Activated naive CD4-positive, alpha-beta T cell treated with anti-CD3 and anti-CD28 coated beads for 36 hours (primary cell): ENCODE measurements at regions of chr1 and their contacts with region 1.

Region 1: GRCh38 chr1:54800899-54801759 is at the start of gene TTC22:
- DNase-seq: peak; percentile 86
- H3K4me3 Mint-ChIP-seq: peak within 1 kb of the TSS; percentile 90
- H3K27ac Mint-ChIP-seq: peak within 1 kb of the TSS; percentile 91
- H3K4me1 Mint-ChIP-seq: peaks cover 55% of the 10 kb centered on the region
- H3K27me3 Mint-ChIP-seq: no peaks in the 10 kb centered on the region
- total RNA-seq, gene TTC22: 6.9 to 8.6 TPM

Region 2: GRCh38 chr1:53837924-53838652 is 963.0 kb before region 1 on chr1 and contains the start of gene NDC1:
- CTCF ChIA-PET with region 1: no interaction called
- intact Hi-C with region 1: loop called (anchors 2 kb)
- DNase-seq: peak; percentile 92
- H3K4me3 Mint-ChIP-seq: peak within 1 kb of the TSS; percentile 100
- H3K27ac Mint-ChIP-seq: peak within 1 kb of the TSS; percentile 96
- H3K4me1 Mint-ChIP-seq: peaks cover 27% of the 10 kb centered on the region
- H3K27me3 Mint-ChIP-seq: no peaks in the 10 kb centered on the region
- total RNA-seq, gene NDC1: 25.9 to 27.9 TPM

Region 3: DNA sequence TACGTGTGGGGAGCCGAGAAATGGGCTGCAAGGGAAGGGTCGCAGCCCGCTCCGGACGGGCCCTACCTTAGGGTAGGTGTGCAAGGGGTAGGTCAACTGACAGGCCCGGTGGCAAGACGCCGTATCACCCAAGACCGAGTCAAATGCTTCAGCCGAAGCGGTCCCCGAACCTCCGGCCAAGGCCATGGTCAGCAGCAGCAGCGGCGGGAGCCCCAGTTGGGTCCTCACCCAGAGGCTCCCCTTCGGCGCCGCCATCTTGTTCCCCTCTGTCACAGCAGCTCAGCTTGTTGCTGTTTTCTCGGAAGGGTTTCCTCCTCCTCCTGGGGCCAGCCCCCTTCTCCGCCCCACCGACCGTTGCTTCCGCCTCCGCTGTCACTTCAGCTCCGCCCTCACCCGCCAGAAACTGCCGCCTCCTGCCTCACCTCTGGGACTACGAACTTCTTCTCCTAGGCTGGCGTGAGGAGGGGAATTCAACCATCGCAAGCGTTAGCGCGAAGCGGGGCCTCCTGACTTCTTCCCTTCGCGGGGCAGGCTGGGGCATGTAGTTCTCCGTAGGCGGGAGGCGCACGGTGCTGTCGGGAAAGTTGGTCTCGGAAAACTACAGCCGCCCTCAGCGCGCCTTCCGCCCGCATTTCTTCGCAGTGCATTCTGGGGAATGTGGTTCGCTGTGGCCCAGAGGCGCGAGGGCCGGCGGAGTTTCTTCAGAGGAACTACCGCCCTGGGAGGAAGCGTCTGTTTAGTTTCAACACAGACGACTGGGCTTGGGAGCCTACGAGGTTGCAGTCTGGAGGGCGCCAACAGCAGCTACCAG is 748.0 kb before region 1 on chr1 and contains the starts of genes TCEANC2 and TMEM59:
- CTCF ChIA-PET with region 1: no interaction called
- intact Hi-C with region 1: loop called (anchors 1 kb)
- DNase-seq: peak; percentile 99
- H3K4me3 Mint-ChIP-seq: no peak within 1 kb of the TSS
- H3K27ac Mint-ChIP-seq: no peak within 1 kb of the TSS
- H3K4me1 Mint-ChIP-seq: peaks cover 37% of the 10 kb centered on the region
- H3K27me3 Mint-ChIP-seq: no peaks in the 10 kb centered on the region
- total RNA-seq, gene TCEANC2: 13.0 TPM
- total RNA-seq, gene TMEM59: 140 to 142 TPM

Region 4: GRCh38 chr1:54287176-54287650 is 513.9 kb before region 1 on chr1:
- CTCF ChIA-PET with region 1: no interaction called
- intact Hi-C with region 1: loop called (anchors 2 kb)
- DNase-seq: peak; percentile 92
- H3K4me3 Mint-ChIP-seq: peak overlapping the region; percentile 69
- H3K27ac Mint-ChIP-seq: peak overlapping the region; percentile 86
- H3K4me1 Mint-ChIP-seq: peaks cover 92% of the 10 kb centered on the region
- H3K27me3 Mint-ChIP-seq: no peaks in the 10 kb centered on the region

Region 5: GRCh38 chr1:54715493-54716298 is 85.4 kb before region 1 on chr1 and contains the start of gene TTC4:
- CTCF ChIA-PET with region 1: interaction called, 3 read pairs
- intact Hi-C with region 1: loop called (anchors 1 kb)
- DNase-seq: peak; percentile 84
- H3K4me3 Mint-ChIP-seq: peak within 1 kb of the TSS; percentile 92
- H3K27ac Mint-ChIP-seq: peak within 1 kb of the TSS; percentile 92
- H3K4me1 Mint-ChIP-seq: peaks cover 31% of the 10 kb centered on the region
- H3K27me3 Mint-ChIP-seq: no peaks in the 10 kb centered on the region
- total RNA-seq, gene TTC4: 26.3 to 30.2 TPM

Region 6: GRCh38 chr1:54996359-54996868 is 195.3 kb after region 1 on chr1:
- CTCF ChIA-PET with region 1: interaction called, 4 read pairs
- intact Hi-C with region 1: loop called (anchors 5 kb)
- DNase-seq: peak; percentile 89
- H3K4me3 Mint-ChIP-seq: no peak overlapping the region
- H3K27ac Mint-ChIP-seq: no peak overlapping the region
- H3K4me1 Mint-ChIP-seq: peaks cover 18% of the 10 kb centered on the region
- H3K27me3 Mint-ChIP-seq: peaks cover 40% of the 10 kb centered on the region